T-cell (primary cell): ENCODE measurements at regions of chr7 and their contacts with region 1.

Region 1: GRCh38 chr7:108461840-108462239 is 5.6 kb upstream of the NRCAM start:
- DNase-seq: no peak
- ATAC-seq: no peak
- H3K4me3 ChIP-seq: no peak overlapping the region
- H3K4me3 Mint-ChIP-seq: no peak overlapping the region
- H3K27ac ChIP-seq: no peak overlapping the region
- H3K27ac Mint-ChIP-seq: no peak overlapping the region
- H3K4me1 ChIP-seq: peaks cover 9 to 26% of the 10 kb centered on the region in 2 experiments
- H3K4me1 Mint-ChIP-seq: peaks cover 45 to 56% (median 46%) of the 10 kb centered on the region in 3 donors
- H3K27me3 ChIP-seq: peaks cover 5 to 8% of the 10 kb centered on the region in 2 experiments
- H3K27me3 Mint-ChIP-seq: peaks cover 16 to 35% of the 10 kb centered on the region in 2 donors

Region 2: GRCh38 chr7:108486291-108486966 is 24.6 kb after region 1 on chr7:
- CTCF ChIA-PET with region 1: interaction called, 10 to 12 read pairs
- POLR2A ChIA-PET with region 1: no interaction called
- DNase-seq: no peak
- ATAC-seq: no peak
- H3K4me3 ChIP-seq: no peak overlapping the region
- H3K4me3 Mint-ChIP-seq: no peak overlapping the region
- H3K27ac ChIP-seq: no peak overlapping the region
- H3K27ac Mint-ChIP-seq: no peak overlapping the region
- H3K4me1 ChIP-seq: no peaks in the 10 kb centered on the region
- H3K4me1 Mint-ChIP-seq: no peaks in the 10 kb centered on the region
- H3K27me3 ChIP-seq: no peaks in the 10 kb centered on the region
- H3K27me3 Mint-ChIP-seq: no peaks in the 10 kb centered on the region